GM18951 (cell line): ENCODE measurements at regions of chr13 and their contacts with region 1.

Region 1: GRCh38 chr13:46492946-46493345 is 60.0 kb upstream of the LRCH1 start:
- POLR2A ChIP-seq: no peak

Region 2: DNA sequence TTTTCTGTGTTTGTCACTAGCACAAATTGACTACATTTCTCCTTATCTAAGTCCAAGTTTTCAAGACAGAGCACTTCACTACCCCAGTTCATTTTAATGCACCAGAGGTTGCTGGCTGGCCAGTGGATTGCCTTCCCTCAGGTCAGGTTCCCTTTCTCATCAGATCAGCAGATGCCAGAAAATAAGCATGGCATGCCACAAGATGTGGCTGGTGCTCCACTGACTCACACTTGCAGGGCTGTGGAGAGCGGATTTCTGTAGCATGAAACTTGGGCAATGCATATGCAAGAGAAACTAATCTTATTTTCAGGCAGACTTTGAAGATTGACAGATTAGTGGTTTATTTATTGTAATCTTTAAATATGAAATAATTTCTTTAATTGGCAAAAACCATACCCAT is 185.4 kb before region 1 on chr13:
- in situ Hi-C with region 1: no loop called
- POLR2A ChIP-seq: no peak

Region 3: DNA sequence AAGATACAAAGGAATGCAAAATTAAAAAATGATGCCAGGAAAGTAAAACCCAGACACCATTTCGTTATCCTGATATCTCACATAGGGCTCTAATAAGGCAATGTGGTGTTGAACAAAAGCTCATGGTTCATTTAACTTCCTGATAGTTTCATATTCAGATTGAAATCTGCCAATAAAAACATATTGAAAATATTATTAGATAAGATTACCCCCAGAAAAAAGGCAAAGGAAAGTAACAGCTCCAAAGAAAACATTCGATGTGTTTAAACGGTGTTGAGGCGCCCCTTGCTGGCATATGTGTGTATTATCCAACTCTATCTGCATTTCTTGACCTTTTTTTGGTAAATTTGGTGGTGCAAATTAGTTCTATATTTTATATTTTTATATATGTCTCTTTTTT is 228.1 kb after region 1 on chr13:
- in situ Hi-C with region 1: loop called (anchors 10 kb)
- POLR2A ChIP-seq: no peak